ENCODE measurements at regions of chr12 and their contacts with region 1.

Region 1: DNA sequence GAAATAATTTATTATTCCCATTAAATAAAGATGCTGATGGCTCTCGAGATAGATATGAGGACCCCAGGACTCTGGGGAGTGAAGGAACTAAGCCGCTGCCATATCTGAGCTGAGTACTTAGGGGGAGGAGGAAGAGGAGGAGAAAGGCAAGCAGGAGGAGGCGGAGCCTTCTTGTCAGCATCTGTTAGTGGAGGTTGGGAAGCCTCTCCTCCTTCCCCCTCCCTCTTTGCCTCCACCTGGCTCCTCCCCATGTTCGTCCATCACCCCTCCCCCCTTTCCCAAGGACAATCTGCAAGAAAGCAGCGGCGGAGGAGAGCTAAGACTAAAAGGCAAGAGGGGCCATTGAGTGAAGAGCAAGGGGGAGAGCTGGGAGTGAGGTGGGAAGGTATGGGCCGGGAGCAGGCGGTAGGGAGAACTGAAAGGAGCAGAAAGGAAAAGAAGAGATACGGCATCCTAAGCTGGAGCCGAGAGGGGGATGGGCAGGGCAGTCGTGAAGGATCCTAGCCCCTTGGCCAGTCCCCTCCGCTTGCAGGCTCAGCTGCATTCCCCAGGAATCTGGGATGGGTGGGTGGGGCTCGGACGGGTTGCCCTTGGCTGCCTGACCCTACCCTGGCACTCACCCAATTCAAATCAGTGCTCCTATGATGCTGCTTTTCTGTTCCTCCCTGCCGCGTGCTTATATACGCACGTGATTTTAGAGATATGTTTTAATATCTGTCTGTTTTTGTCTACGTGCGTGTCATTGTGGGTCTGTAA is at the start of gene PFKM:
- DNase-seq: peak; percentile 64 to 73 (median 66)
- H3K4me3 ChIP-seq: peak within 1 kb of the TSS; percentile 56 to 77
- H3K4me3 Mint-ChIP-seq: peak within 1 kb of the TSS; percentile 91 to 100 (median 98)
- H3K27ac ChIP-seq: peak within 1 kb of the TSS; percentile 33
- H3K27ac Mint-ChIP-seq: peak within 1 kb of the TSS in 6 of 7 donors; percentile 93 to 98 (median 95)
- H3K4me1 ChIP-seq: peaks cover 15% of the 10 kb centered on the region
- H3K4me1 Mint-ChIP-seq: peaks cover 18 to 28% (median 18%) of the 10 kb centered on the region in 4 donors
- H3K27me3 ChIP-seq: no peaks in the 10 kb centered on the region
- H3K27me3 Mint-ChIP-seq: peaks cover 4 to 6% of the 10 kb centered on the region in 2 donors
- total RNA-seq, gene PFKM: 13.6 to 14.6 TPM

Region 2: DNA sequence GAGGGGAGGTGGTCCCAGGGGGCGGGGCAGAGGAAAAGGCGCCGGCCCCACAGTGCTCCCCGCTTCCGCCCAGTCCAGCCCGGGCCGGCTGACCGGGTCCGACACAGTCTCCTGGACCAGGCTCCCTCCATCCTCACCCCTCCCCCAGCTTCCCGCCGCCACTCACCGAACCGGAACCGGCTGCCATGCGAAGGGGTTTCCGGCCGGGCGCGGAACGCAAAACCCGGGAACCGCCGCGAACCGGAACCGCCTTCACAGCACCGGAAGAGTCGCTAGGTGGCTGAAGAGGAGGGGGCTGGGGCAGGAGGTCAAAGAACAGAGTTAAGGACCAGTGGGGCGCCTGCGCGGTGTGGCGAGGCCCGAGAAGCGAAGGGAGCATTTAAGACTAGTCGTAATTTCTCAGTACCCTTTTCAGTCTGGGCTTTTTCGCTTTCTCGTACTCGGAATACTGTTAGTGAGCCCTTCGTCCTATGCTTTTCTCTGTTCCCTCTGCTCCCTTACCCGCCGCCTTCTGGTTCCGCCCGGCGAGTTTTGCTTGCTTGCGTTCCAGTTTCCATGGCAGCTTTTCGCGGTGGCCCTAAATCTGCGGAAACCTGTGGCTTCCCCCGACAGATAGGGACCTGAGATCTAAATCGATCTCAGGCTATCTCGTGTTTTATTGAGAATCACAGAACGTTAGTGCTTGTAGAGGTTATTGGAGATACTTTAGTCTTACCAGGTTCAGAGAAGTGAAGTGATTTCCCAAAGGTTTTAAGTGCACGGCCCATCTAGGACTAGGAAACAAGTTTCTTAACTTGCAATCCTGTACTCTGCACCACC is 13.2 kb before region 1 on chr12 and contains the start of gene SENP1:
- CTCF ChIA-PET with region 1: interaction called, 3 read pairs
- POLR2A ChIA-PET with region 1: interaction called, 28 read pairs
- intact Hi-C with region 1: loop called (anchors 1 kb)
- DNase-seq: peak; percentile 91 to 93 (median 92)
- H3K4me3 ChIP-seq: peak within 1 kb of the TSS; percentile 84 to 93
- H3K4me3 Mint-ChIP-seq: peak within 1 kb of the TSS; percentile 89 to 97 (median 92)
- H3K27ac ChIP-seq: peak within 1 kb of the TSS; percentile 96
- H3K27ac Mint-ChIP-seq: peak within 1 kb of the TSS; percentile 93 to 100 (median 99)
- H3K4me1 ChIP-seq: peaks cover 42% of the 10 kb centered on the region
- H3K4me1 Mint-ChIP-seq: peaks cover 42 to 65% (median 52%) of the 10 kb centered on the region in 4 donors
- H3K27me3 ChIP-seq: no peaks in the 10 kb centered on the region
- H3K27me3 Mint-ChIP-seq: no peaks in the 10 kb centered on the region
- total RNA-seq, gene SENP1: 28.7 to 35.1 TPM

Measured in CD4-positive, alpha-beta memory T cell (primary cell).